ENCODE measurements at regions of chr7 and their contacts with region 1.

Region 1: DNA sequence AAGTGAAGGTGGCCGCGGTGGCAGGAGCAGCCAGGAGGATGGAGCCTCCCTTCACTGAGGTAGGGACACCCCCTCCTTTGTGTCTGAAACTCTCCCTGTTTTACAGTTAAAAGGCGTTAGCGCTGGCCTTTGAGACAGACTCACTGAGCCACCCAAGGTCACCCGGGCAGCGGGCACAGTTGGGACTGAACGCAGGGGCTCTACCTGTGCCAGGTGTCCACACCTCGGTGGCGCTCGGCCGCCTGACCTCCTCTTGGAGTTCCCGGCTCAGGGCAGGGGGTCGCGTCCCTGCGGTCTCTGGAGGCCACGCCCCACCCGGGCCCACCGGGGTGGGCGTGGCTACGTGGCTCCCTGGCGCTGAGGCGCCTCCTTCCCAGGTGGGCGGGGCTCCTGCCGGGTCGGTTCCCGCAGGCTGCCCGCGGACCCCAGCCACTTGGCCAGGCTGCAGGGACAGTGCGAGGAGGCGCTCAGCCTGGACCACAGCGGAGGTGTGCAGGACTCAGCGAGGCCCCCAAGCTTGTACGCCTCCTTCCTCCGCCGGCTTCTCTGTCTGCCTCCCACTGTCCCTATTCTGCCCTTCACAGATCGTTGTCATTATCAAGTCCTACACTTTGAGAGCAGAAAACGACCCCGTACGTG is 39.9 kb upstream of the LEP start:
- DNase-seq: peak; percentile 64

Region 2: GRCh38 chr7:127578036-127578684 is 623.0 kb before region 1 on chr7:
- intact Hi-C with region 1: loop called in 1 of 2 experiments (anchors 5 kb)
- DNase-seq: no peak

Region 3: DNA sequence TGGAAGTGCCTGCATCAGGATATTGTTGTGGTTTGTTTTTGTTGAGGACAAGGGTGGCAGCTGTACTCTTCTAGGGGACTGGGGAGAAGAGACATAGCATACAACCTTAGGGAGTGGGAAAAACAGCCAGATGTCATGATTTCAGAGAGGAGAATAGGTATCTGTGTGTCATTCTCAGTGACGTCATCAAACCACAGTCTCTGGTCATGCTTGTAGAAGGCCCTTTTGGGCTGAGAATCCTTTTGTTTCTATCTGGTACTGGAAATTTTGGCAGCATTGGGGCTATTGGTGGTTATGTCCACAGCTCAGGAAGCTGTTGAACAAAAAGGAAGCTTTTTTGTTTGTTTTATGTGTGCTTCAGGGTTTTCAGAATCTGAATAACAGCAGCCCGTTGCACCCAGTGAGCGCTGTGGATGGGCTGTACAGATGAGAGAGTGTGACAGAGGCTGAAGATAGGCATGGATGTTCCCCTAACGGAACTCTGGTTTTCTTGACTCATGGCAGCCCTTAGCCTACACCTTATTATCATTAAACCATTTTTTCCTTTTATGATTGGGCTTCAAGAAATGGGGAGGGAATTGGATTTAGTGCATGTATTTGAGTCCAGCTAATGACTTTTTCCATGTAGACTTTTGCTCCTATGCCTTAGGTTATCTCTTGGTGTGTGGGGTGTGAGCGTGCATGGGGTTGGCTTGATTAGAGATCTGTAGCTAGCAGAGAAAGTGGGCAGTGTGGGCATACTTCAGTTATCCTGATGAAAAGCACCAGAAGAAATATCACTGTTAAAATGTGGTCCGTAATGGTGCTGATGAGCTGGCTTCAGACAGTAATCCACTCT is 483.4 kb before region 1 on chr7:
- intact Hi-C with region 1: loop called in 1 of 2 experiments (anchors 5 kb)
- DNase-seq: no peak

Region 4: GRCh38 chr7:128135515-128136214 is 65.5 kb before region 1 on chr7:
- intact Hi-C with region 1: loop called (anchors 5 kb)
- DNase-seq: no peak

Region 5: DNA sequence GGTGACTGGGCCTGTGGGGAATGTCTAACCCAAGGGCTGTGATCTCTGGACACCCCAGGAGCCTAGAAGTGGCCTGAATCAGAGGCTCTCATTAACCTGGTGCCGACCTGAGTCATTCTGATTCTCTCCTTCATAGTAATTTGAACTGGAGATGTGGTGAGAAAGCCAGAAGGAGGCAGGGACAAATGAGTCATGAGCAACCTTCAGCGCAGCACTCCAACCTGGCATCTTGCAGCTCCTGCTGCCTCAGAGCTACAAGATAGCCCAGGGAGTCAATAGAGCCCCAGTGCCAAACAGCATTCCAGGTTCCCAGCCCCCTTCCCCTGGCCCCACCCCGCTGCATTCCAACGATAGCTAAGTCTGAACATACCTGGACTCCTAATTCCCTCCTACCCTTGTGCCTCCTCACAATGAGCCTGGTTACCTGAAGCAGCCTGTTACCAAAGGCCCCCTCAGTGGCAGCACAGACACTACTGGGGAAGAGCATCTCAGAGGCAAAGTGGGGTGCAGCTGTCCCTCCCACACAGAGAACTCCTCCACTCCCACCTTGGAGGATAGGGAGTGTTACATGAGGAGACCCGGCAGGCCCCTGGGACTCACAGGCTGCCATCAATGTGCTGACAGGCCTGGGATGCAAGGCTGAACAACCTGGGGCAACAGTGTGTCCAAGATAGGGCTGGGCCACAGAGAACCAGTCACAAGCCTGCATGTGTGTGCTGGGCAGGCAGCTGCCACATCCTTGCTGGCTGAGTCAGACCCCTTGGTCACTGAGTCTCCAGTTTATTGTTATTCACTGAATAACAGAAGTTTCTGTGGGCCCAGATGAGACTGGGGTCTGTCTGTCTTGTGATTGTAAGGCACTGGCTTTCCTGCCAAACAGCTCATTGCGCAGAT is 36.9 kb before region 1 on chr7:
- intact Hi-C with region 1: no loop called
- DNase-seq: peak; percentile 42

Region 6: DNA sequence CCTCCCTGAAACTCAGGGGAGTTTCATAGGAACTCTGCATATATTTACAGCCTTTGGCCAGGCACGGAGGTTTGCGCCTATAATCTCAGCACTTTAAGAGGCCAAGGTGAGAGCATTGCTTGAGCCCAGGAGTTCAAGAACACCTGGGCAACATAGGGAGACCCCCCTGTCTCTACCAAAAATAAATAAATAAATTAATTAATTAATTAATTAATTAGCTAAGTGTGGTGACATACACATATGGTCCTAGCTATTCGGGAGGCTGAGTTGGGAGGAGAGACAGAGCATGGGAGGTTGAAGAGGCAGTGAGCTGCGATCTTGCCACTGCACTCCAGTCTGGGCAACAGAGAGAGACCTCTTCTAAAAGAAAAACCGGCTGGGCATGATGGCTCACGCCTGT is 30.5 kb after region 1 on chr7:
- intact Hi-C with region 1: loop called in 1 of 2 experiments (anchors 1 kb)
- DNase-seq: no peak